AG04449 (cell line): ENCODE measurements at regions of chr16 and their contacts with region 1.

Region 1: GRCh38 chr16:29961479-29962343 is at the start of gene TMEM219:
- DNase-seq: no peak
- H3K4me3 ChIP-seq: peak within 1 kb of the TSS; percentile 79
- CTCF ChIP-seq: peak; percentile 26

Region 2: DNA sequence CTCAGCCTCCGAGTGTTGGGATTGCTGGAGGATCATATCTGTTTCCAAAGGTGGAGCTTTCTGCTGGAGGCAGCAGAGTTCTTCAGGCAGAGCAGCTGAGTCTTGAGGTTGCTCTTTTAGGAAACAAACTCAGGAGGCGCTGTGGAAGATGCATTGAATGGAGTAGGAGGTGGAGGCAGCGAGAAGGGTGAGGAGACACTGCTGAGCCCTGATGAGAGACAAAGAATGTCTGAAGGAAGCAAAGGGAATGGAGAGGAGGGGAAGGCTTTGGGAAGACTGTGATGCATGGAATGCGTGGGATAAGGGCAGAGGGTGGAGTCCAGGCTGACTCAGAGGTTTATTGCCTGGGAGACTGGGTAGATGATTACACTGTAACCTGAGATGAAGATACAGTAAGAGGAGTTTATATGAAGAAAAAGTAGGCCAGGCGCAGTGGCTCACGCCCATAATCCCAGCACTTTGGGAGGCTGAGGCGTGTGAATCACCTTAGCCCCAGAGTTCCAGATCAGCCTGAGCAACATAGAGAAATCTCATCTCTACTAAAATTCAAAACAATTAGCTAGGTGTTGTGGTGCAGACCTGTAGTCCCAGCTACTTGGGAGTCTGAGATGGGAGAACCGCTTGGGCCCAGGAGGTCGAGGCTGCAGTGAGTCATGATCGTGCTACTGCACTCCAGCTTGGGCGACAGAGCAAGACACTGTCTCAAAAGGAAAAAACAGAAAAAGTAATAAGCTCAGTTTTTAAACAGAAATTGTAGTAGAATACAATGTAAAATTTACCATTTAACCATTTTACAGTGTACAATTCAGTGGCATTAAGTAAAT is 17.7 kb before region 1 on chr16:
- CTCF ChIA-PET with region 1: interaction called, 19 read pairs
- POLR2A ChIA-PET with region 1: interaction called, 21 read pairs
- DNase-seq: peak; percentile 95
- H3K4me3 ChIP-seq: peak overlapping the region; percentile 24
- CTCF ChIP-seq: peak; percentile 41